HEK293T (cell line): ENCODE measurements at regions of chr5 and their contacts with region 1.

Region 1: DNA sequence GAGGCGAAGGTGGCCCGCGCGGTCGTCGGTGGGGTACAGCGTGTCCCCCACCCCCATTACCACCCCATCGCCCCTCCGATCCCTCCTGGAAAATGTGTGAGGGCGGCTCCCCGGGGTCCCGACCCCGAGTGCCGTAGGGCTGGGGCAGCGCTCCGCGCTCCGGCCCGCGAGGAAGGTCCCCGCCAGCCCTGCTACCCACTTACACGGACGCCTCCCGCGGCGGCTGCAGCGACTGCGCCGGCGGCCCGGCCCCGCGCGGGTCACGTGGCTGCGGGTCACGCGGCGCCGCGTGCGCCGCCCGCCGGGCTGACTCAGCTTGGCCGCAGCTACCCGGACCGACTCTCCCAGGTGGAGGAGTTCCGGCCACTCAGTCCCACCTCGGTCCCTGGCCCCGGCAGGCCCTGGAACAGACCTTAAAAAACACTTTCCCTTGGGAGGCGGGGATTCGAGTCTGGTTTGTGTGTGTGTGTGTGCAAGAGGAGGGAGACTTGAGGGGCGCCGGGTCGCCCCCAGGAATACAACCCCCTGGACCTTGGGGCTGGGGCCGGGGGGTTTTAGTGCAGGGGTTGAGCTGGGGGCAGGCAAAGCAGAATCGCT is at the start of gene GNPDA1:
- DNase-seq: peak; percentile 86

Region 2: DNA sequence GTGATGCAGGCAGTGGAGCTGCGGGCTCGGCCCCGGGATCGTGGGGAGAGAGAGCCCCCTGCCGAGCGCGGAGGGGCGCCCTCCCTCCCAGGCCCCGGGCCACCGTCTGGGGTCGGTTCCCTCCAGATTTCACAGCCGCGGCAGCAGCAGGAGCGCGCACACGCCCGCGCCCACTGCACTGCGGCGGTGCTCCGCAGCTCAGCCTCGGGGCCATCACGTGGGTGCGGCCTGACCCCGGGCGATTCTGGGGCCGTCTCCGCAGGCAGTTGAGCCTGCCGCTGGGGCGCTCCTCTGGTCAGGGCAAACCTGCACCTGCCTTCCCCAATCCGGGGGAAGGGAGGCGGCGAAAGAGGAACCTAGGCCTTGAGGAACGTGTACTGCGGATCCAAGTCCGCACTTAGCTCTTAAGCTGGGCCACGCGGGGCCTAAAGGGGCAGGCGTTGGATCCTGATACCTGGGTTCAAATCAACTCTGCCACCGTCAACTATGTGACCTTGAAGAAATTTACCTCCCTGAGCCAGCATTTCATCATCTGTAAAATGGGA is 98.6 kb before region 1 on chr5:
- CTCF ChIA-PET with region 1: no interaction called
- POLR2A ChIA-PET with region 1: no interaction called
- DNase-seq: peak; percentile 28

Region 3: DNA sequence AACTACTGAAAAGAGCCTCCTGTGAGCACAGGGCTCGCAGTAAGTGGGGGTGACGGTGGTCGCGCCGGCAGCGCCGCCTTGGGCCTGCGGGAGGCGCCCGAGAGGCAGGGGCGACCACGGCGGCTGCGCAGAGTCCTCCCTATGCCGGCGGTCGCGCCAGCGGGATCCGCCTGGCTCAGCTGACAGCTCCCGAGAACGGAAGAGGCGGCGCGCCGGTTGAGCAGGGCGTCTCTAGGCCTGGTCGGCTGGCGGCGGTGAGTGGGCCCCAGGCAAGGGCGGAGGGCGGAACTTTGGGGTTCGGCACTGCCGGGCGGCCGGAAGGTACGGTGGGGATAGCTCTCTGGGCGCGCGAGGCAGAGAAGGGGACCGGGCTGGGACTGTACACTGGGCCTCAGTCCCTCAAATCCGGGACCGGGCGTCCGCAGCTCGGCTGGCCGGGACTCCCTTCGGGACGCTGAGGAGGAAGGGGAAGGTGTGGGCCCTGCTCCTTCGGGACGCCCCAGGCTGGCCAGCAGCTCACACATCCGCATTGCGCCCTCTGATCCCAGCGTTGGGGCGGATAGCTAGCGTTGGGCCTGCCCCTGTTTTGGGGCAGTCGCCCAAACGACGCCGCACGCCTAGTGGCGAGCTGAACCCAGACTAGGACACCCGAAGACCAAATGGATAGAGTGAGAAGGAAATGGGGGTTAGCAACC is 43.8 kb before region 1 on chr5 and contains the start of gene RNF14:
- CTCF ChIA-PET with region 1: interaction called, 6 read pairs
- POLR2A ChIA-PET with region 1: interaction called, 14 read pairs
- DNase-seq: peak; percentile 95

Region 4: DNA sequence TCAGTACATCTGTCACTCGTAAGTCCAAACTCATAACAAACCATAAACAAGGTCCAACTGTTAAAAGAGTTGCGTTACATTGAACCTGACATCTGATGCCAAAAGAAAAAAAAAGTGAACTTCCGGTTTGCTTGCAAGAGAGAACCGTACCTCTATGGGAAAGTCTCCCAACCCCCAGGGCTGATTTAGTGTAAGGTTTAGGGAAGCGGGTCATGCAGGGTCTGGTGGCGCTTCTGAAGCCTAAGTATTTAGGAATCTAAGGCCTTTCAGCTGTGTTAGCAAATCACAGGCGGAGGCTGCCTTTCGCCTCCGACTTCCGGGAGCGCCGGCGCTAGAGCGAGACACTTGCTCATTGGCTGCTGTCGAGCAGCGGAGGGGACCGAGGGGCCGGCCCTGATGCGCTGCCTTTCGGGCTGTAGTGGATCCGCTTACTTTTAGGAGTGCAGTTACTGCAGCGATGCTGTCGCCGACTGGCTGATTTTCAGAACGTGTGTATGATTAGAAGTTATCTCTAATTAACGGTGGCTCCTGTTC is 11.9 kb after region 1 on chr5:
- CTCF ChIA-PET with region 1: interaction called, 8 read pairs
- POLR2A ChIA-PET with region 1: interaction called, 16 read pairs
- DNase-seq: peak; percentile 92

Region 5: DNA sequence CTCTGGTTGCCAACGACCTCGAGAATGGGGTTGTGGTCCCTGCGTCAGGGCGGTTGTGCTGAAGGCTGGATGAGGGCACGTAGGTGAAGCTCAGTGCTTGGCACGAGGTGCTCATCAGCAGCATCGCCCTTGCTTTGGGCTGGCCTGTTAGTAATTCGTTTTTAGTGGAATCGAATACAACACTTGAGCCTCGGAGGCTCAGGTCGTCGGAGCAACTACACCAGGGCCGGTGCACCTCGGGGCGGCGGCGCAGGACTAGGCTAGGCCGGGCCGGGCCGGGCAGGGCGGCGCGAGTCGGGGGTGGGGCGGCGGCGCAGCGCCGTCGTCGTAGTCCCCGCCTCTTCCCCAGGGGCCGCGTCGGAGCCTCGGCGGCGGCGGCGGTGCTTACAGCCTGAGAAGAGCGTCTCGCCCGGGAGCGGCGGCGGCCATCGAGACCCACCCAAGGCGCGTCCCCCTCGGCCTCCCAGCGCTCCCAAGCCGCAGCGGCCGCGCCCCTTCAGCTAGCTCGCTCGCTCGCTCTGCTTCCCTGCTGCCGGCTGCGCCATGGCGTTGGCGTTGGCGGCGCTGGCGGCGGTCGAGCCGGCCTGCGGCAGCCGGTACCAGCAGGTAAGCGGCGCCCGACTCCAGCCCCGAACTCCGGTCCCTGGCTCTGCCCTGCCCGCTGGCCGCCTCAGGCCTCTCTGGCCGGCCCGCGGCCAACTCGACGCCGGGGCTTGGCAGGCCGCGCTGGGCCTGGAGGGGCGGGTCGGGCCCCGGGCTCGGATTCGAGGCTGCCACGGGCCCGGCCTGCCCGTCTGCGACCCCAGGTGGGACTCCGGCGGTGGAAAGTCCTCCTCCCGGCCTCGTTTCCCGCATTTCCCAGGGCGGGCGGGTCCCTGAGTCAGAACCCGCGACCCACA is 95.8 kb after region 1 on chr5 and contains the start of gene NDFIP1:
- CTCF ChIA-PET with region 1: interaction called, 13 read pairs
- POLR2A ChIA-PET with region 1: interaction called, 33 read pairs
- DNase-seq: peak; percentile 78

Region 6: DNA sequence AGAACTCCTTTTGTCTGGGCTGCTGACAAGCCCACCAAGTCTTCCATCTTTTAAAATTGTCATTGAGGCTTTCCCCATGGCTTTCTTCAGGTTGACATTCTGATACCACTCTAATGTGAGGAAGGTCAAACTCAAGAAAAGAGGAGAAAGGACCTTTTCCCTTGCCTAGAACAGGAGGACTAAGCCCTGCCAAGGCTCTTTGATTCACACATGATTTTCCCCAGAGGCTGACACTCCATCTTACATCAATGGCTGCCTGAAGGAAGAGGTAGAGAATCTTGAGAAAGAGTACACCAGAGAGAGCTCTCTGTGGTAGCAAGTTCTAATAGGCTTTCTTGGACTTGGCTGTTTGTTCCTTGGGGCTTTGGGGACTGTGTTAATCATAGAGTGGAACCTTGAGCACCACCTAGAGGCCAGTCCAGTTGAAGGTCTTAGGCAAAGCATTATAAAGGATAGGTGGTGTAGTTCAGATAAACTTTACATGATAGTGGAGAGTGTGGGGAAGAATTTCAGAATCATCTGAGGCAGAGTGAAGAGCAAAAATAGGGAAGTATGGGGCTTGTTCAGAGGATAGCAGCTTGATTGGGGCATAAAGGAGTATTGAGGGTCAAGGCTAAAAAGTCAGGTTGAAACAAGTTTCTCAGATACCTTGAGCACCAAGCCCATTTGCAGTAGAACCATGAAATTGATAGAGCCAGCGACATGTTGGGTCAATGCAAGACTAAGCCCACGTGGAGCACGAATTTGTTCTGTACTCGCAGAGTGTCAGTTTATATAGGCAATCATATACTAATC is 132.4 kb after region 1 on chr5:
- CTCF ChIA-PET with region 1: interaction called, 57 read pairs
- POLR2A ChIA-PET with region 1: interaction called, 3 read pairs
- DNase-seq: peak; percentile 57

Region 7: GRCh38 chr5:142253938-142254337 is 241.0 kb after region 1 on chr5:
- CTCF ChIA-PET with region 1: no interaction called
- POLR2A ChIA-PET with region 1: no interaction called
- DNase-seq: no peak